ENCODE measurements at regions of chr5 and their contacts with region 1.

Region 1: DNA sequence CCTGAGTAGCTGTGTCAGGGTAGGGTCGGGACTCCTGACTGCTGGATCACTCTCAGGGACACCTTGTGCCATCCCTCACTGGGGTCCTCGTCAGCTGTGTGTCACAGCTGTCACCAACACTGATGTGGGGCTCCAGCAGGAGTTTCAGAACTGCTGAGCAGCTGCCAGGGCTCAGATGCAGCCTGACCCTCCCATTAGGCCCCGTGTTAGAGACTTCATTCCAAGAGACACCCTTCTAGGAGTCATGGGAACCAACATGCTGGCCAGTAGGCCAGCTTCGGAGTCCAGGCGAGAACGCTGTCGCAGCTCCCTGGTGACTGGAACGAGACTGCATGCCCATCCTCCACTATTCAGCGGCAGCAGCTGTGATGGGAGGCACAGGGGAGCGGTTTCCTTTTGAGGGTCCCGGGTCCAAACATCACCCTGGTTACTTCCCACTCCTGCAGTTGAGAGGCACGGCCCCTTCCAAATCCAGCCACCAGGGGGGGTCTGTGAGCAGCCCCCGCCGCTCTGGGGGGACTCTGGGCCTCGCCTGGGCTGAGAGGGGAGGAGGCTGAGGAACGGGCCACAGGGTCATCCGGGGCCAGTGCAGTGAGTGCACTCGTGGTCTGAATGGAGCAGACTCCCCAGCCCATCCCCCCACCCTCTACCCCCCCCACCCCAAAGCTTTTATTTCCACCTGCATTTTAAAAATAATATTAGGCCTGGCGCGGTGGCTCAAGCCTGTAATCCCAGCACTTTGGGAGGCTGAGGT is 12.6 kb upstream of the TCF7 start:
- DNase-seq: peak in 8 of 9 donors; percentile 55 to 79 (median 69)
- ATAC-seq: peak; percentile 62
- H3K4me3 ChIP-seq: peak overlapping the region; percentile 19
- H3K4me3 Mint-ChIP-seq: peak overlapping the region in 6 of 10 donors; percentile 27 to 81 (median 64)
- H3K27ac ChIP-seq: peak overlapping the region; percentile 80
- H3K27ac Mint-ChIP-seq: peak overlapping the region in 8 of 9 donors; percentile 32 to 98 (median 94)
- H3K4me1 ChIP-seq: peaks cover 73 to 89% of the 10 kb centered on the region in 2 donors
- H3K4me1 Mint-ChIP-seq: peaks cover 51 to 98% (median 83%) of the 10 kb centered on the region in 7 donors
- H3K27me3 ChIP-seq: no peaks in the 10 kb centered on the region
- H3K27me3 Mint-ChIP-seq: peaks cover 0 to 11% (median 0%) of the 10 kb centered on the region in 5 donors

Region 2: DNA sequence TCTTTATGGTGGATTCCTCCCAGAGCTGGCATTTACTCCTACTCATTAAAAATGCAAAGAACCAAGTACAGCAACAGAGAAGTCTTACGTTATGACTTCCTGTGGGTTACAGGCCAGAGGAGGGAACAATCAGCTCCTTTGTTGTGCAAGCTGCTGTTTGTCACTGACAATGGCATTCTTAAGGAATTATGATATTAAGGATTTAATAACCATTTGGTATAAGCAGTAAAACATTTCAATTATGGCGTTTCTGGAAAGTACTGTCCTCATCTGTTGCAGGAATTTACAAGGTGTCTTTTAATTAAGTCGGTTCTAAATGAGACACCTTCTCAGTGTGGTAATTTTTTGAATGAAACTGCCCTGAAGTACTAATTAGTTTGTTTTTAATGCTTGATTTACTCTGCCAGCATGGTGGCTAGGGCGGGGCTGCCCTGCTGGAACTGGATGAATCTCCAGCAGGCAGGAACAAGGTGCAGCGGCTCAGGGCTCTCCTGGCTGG is 48.0 kb before region 1 on chr5:
- CTCF ChIA-PET with region 1: interaction called, 6 read pairs
- POLR2A ChIA-PET with region 1: interaction called, 20 read pairs
- intact Hi-C with region 1: no loop called
- DNase-seq: peak in 5 of 9 donors; percentile 25 to 42 (median 36)
- ATAC-seq: peak; percentile 78
- H3K4me3 ChIP-seq: no peak overlapping the region
- H3K4me3 Mint-ChIP-seq: peak overlapping the region; percentile 52 to 88 (median 74)
- H3K27ac ChIP-seq: peak overlapping the region; percentile 58
- H3K27ac Mint-ChIP-seq: peak overlapping the region; percentile 72 to 97 (median 90)
- H3K4me1 ChIP-seq: peaks cover 7 to 50% of the 10 kb centered on the region in 2 donors
- H3K4me1 Mint-ChIP-seq: peaks cover 24 to 61% (median 46%) of the 10 kb centered on the region in 7 donors
- H3K27me3 ChIP-seq: no peaks in the 10 kb centered on the region
- H3K27me3 Mint-ChIP-seq: no peaks in the 10 kb centered on the region

Region 3: GRCh38 chr5:134077926-134078580 is 23.8 kb before region 1 on chr5:
- CTCF ChIA-PET with region 1: interaction called, 40 read pairs
- POLR2A ChIA-PET with region 1: interaction called, 52 read pairs
- intact Hi-C with region 1: no loop called
- DNase-seq: peak in 2 of 9 donors; percentile 43 to 45
- ATAC-seq: peak; percentile 49
- H3K4me3 ChIP-seq: no peak overlapping the region
- H3K4me3 Mint-ChIP-seq: peak overlapping the region; percentile 59 to 83 (median 78)
- H3K27ac ChIP-seq: peak overlapping the region; percentile 46
- H3K27ac Mint-ChIP-seq: peak overlapping the region; percentile 90 to 99 (median 97)
- H3K4me1 ChIP-seq: peaks cover 20 to 73% of the 10 kb centered on the region in 2 donors
- H3K4me1 Mint-ChIP-seq: peaks cover 43 to 91% (median 83%) of the 10 kb centered on the region in 7 donors
- H3K27me3 ChIP-seq: no peaks in the 10 kb centered on the region
- H3K27me3 Mint-ChIP-seq: no peaks in the 10 kb centered on the region

Region 4: GRCh38 chr5:134113902-134114875 is 12.3 kb after region 1 on chr5 and contains the start of gene TCF7:
- CTCF ChIA-PET with region 1: no interaction called
- POLR2A ChIA-PET with region 1: no interaction called
- intact Hi-C with region 1: loop called (anchors 1 kb)
- DNase-seq: peak; percentile 69 to 87 (median 83)
- ATAC-seq: peak; percentile 89
- H3K4me3 ChIP-seq: peak within 1 kb of the TSS; percentile 93
- H3K4me3 Mint-ChIP-seq: peak within 1 kb of the TSS; percentile 93 to 100 (median 98)
- H3K27ac ChIP-seq: peak within 1 kb of the TSS; percentile 97
- H3K27ac Mint-ChIP-seq: peak within 1 kb of the TSS; percentile 88 to 99 (median 98)
- H3K4me1 ChIP-seq: peaks cover 34 to 63% of the 10 kb centered on the region in 2 donors
- H3K4me1 Mint-ChIP-seq: peaks cover 27 to 67% (median 31%) of the 10 kb centered on the region in 7 donors
- H3K27me3 ChIP-seq: no peaks in the 10 kb centered on the region
- H3K27me3 Mint-ChIP-seq: peaks cover 0 to 43% (median 0%) of the 10 kb centered on the region in 5 donors
- total RNA-seq, gene TCF7: 203 to 1,066 (median 643) TPM

Region 5: DNA sequence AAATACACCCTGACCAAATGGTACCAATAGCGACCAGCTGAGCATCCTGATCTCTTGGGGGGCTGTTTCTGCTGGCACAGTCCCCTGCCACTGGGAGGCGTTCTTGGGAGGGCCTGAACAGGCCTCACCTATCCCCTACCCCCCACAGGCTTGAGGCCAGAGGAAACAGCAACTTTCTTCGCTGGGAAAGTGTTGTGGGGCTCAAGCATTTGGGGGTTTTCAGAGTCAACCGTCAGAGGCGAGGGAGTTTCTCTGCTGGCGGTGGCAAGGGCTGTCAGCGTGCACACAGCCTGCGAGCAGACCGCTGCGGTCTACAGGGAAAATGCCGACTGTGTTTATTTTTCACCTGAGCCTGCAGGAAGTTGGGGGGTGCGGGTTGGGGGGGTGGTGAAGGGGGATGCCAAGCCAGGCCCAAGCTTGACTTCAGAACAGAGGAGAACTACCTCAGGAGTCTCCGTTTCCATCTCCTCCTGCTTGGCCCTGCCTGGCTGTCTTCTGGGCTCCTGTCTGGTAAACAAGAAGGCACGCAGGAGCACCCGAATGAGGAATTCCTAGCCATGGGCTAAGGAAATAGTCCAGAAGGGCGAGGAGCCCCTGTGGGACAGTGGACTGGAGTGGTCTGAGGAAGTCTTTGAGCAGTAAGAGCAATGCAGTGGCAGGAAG is 30.6 kb after region 1 on chr5:
- CTCF ChIA-PET with region 1: no interaction called
- POLR2A ChIA-PET with region 1: no interaction called
- intact Hi-C with region 1: loop called (anchors 1 kb)
- DNase-seq: peak; percentile 52 to 94 (median 87)
- ATAC-seq: peak; percentile 87
- H3K4me3 ChIP-seq: peak overlapping the region; percentile 86
- H3K4me3 Mint-ChIP-seq: peak overlapping the region; percentile 93 to 100 (median 98)
- H3K27ac ChIP-seq: peak overlapping the region; percentile 97
- H3K27ac Mint-ChIP-seq: peak overlapping the region; percentile 90 to 99 (median 98)
- H3K4me1 ChIP-seq: peaks cover 92 to 97% of the 10 kb centered on the region in 2 donors
- H3K4me1 Mint-ChIP-seq: peaks cover 57 to 100% (median 90%) of the 10 kb centered on the region in 7 donors
- H3K27me3 ChIP-seq: no peaks in the 10 kb centered on the region
- H3K27me3 Mint-ChIP-seq: peaks cover 0 to 2% (median 0%) of the 10 kb centered on the region in 5 donors

Region 6: DNA sequence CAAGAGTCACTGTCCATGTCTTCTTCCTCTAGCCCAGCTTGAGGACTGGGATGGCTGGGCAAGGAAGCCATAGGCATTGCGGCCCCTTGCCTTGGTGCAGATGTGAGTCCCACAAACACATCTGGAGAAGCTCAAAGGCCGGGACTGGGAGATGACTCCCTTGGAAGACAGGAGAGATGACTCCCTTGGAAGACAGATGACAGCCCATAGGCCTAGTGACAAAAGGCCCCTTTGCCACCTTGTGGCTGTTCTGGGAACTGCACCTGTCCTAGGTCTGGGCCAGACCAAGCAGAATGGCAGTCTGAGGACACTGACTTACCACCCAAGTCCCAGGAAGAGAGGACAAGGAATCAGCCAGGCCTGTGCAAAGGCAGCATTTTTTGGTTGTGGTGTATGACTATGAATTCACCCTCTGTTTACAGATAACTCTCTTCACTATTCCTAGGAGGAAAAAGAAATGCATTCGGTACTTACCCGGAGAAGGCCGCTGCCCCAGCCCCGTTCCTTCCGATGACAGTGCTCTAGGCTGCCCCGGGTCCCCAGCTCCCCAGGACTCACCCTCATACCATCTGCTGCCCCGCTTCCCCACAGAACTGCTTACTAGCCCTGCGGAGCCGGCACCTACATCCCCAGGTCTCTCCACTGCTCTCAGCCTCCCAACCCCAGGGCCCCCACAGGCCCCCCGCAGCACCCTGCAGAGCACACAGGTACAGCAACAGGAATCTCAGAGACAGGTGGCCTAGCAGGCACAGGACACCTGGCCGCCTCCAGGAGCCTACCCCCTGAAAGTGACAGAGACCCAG is 44.1 kb after region 1 on chr5:
- CTCF ChIA-PET with region 1: interaction called, 36 read pairs
- POLR2A ChIA-PET with region 1: no interaction called
- intact Hi-C with region 1: loop called in 1 of 2 experiments (anchors 1 kb)
- DNase-seq: peak; percentile 64 to 87 (median 77)
- ATAC-seq: peak; percentile 84
- H3K4me3 ChIP-seq: no peak overlapping the region
- H3K4me3 Mint-ChIP-seq: peak overlapping the region in 4 of 10 donors; percentile 18 to 54 (median 27)
- H3K27ac ChIP-seq: peak overlapping the region; percentile 63
- H3K27ac Mint-ChIP-seq: peak overlapping the region in 8 of 9 donors; percentile 75 to 93 (median 90)
- H3K4me1 ChIP-seq: peaks cover 5 to 29% of the 10 kb centered on the region in 2 donors
- H3K4me1 Mint-ChIP-seq: peaks cover 21 to 67% (median 46%) of the 10 kb centered on the region in 7 donors
- H3K27me3 ChIP-seq: no peaks in the 10 kb centered on the region
- H3K27me3 Mint-ChIP-seq: no peaks in the 10 kb centered on the region

Measured in naive thymus-derived CD4-positive, alpha-beta T cell (primary cell).